ENCODE measurements at regions of chr1 and their contacts with region 1.

Region 1: DNA sequence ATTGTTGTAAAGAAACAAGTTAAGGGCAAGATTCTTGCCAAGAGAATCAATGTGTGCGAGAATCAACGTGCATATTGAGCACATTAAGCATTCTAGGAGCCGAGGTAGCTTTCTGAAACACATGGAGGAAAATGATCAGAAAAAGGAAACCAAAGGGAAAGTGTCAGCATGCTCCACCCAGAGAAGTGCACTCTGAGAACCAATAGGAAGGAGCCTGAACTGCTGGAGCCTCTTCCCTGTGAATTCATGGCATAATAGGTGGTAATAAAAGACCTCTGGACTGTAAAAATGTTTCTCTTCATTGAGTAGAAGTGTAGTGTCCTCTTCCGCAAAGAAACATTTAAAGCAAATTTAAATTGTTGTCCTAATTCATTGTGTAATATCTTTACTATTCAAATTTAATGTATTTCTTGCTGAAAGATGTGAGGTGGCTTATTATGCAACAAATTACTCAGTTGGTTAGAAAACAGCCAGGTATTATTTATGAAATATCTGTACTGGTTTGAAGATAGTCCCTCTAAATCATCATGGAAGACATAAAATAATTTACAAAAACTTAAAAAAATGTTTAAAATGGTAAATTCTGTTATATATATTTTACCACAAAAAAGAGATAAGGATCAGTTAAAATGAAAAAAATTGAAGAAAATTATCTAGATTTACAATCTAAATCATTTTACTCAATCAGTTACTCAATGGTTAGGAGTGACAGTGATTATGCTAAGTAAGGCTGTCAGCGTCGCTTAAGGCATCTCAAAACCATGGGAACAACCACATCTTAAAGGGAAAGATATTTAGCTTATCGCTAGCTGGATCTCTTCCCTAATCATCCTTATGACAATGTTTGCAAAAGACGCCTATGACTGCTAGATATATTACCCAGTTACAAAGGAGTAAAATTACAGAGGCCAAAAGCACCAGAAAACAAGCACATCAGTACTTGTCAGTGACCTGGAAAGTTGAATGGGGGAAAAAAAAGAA is 31.3 kb downstream of the NVL start:
- DNase-seq: no peak
- H3K4me3 ChIP-seq: no peak overlapping the region
- H3K27ac ChIP-seq: no peak overlapping the region
- H3K4me1 ChIP-seq: peaks cover 13% of the 10 kb centered on the region
- H3K27me3 ChIP-seq: no peaks in the 10 kb centered on the region
- CTCF ChIP-seq: no peak

Region 2: GRCh38 chr1:224368409-224368808 is 69.8 kb after region 1 on chr1:
- CTCF ChIA-PET with region 1: no interaction called
- dilution Hi-C with region 1: loop called (anchors 5 kb)
- in situ Hi-C with region 1: no loop called
- intact Hi-C with region 1: no loop called
- DNase-seq: no peak
- H3K4me3 ChIP-seq: no peak overlapping the region
- H3K27ac ChIP-seq: no peak overlapping the region
- H3K4me1 ChIP-seq: no peaks in the 10 kb centered on the region
- H3K27me3 ChIP-seq: no peaks in the 10 kb centered on the region
- CTCF ChIP-seq: no peak